ENCODE measurements at regions of chr12 and their contacts with region 1.

Region 1: DNA sequence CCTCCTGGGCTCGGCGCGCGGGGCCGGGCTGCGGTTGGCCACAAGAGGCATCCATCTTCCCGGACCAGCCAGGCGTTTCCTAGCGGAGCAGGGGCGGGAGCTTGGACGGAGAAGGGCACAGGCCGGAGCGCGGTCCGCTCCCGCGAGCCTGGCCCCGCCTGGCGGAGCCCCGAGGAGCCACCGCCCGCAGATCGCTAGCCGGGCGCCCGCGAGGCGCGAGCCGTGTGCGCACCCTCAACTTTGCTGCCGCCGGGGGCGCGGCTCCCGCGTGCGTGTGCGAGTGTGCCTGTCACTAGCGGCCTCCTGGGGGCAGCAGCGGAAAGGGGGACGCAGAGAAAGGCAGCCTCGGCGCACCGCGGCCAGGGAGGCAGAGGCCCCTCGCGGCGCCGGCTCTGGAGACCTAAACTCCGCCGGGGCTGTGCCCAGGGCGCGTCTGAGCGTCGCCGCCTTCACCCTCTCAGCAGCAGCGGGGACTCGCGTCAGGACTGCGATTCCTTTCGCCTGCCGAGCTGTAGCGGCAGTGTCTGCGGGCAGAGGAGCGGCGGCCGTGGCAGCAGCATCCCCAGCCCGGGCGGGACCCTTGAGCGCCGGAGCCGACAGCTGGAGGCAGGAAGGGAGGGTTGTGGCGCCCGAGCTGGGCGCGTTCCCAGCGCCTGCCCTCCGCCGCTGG is 644 bp upstream of the SRGAP1 start:
- DNase-seq: peak; percentile 85
- H3K4me3 Mint-ChIP-seq: peak overlapping the region; percentile 62
- H3K27ac Mint-ChIP-seq: no peak overlapping the region
- H3K4me1 Mint-ChIP-seq: peaks cover 9% of the 10 kb centered on the region
- H3K27me3 Mint-ChIP-seq: peaks cover 30% of the 10 kb centered on the region

Region 2: DNA sequence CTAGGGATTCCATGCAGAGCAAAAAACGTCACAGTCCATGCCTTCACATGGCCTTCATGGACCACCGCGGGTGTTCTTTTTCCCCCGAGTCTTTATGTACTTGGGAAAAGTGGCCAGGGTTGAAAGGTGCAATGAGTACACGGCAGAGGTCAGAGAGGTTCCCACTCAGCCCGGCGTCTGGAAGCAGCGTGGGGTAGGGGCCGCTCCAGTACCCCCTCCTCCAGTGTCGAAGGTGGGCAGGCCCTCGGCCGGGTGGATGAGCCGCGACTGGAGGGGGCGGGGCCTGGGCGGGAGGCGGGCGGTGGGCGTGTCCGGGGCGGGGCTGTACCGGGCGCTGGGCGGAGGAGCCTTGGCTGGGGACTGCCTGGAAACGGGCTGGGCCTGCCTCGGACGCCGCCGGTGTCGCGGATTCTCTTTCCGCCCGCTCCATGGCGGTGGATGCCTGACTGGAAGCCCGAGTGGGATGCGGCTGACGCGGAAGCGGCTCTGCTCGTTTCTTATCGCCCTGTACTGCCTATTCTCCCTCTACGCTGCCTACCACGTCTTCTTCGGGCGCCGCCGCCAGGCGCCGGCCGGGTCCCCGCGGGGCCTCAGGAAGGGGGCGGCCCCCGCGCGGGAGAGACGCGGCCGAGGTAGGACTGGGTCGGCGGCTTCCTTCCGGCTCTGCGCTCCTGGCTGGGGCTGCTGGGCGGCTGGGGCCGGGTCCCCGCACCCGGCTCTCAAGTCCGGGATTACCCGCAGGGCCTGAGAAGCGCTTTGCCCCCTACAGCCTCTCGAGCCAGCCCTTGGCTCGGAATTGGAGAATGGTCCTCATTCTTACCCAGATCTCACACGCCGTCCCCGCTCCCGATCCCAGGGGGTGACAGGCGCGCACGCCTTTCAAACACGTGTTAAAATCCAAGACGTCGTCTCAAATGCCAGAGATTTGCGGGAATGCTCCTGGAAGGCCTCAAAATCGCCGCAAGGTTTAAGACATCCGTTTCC is 64.1 kb before region 1 on chr12 and contains the start of gene RXYLT1:
- CTCF ChIA-PET with region 1: interaction called, 3 read pairs
- POLR2A ChIA-PET with region 1: no interaction called
- intact Hi-C with region 1: loop called (anchors 2 kb)
- DNase-seq: peak; percentile 90
- H3K4me3 Mint-ChIP-seq: peak within 1 kb of the TSS; percentile 93
- H3K27ac Mint-ChIP-seq: peak within 1 kb of the TSS; percentile 88
- H3K4me1 Mint-ChIP-seq: peaks cover 10% of the 10 kb centered on the region
- H3K27me3 Mint-ChIP-seq: no peaks in the 10 kb centered on the region
- total RNA-seq, gene RXYLT1: 14.0 to 14.3 TPM

Region 3: GRCh38 chr12:64099397-64099796 is 255.5 kb after region 1 on chr12:
- CTCF ChIA-PET with region 1: no interaction called
- POLR2A ChIA-PET with region 1: no interaction called
- intact Hi-C with region 1: no loop called
- DNase-seq: no peak
- H3K4me3 Mint-ChIP-seq: no peak overlapping the region
- H3K27ac Mint-ChIP-seq: no peak overlapping the region
- H3K4me1 Mint-ChIP-seq: no peaks in the 10 kb centered on the region
- H3K27me3 Mint-ChIP-seq: peaks cover 13% of the 10 kb centered on the region

Region 4: DNA sequence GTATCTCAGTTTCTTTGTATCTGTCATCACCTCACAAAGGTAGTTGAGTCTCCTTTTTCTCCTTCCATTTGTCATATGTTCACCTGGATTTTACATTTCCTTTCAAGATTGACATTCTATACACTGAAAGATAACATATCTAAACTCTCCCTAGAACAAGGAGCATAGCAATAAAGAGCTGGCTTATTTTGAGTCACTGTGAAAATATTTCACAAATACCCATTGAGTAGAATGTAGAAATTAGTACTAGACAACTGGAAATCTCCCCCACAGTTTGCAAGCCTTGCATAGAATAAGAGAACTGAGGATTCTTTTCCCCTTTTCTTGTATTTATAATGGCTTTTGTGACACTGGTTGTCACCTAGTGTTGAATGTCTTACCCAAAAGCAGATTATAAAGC is 267.0 kb after region 1 on chr12:
- CTCF ChIA-PET with region 1: no interaction called
- POLR2A ChIA-PET with region 1: no interaction called
- intact Hi-C with region 1: no loop called
- DNase-seq: no peak
- H3K4me3 Mint-ChIP-seq: no peak overlapping the region
- H3K27ac Mint-ChIP-seq: no peak overlapping the region
- H3K4me1 Mint-ChIP-seq: no peaks in the 10 kb centered on the region
- H3K27me3 Mint-ChIP-seq: peaks cover 10% of the 10 kb centered on the region

Region 5: GRCh38 chr12:64222009-64222765 is 378.3 kb after region 1 on chr12 and contains the start of gene KICS2:
- CTCF ChIA-PET with region 1: interaction called, 6 read pairs
- POLR2A ChIA-PET with region 1: no interaction called
- intact Hi-C with region 1: loop called (anchors 1 kb)
- DNase-seq: peak; percentile 94
- H3K4me3 Mint-ChIP-seq: peak within 1 kb of the TSS; percentile 83
- H3K27ac Mint-ChIP-seq: peak within 1 kb of the TSS; percentile 84
- H3K4me1 Mint-ChIP-seq: peaks cover 20% of the 10 kb centered on the region
- H3K27me3 Mint-ChIP-seq: peaks cover 2% of the 10 kb centered on the region
- total RNA-seq, gene KICS2: 12.4 to 14.1 TPM

Region 6: GRCh38 chr12:64256166-64256800 is 412.4 kb after region 1 on chr12:
- CTCF ChIA-PET with region 1: interaction called, 24 read pairs
- POLR2A ChIA-PET with region 1: no interaction called
- intact Hi-C with region 1: loop called (anchors 1 kb)
- DNase-seq: no peak
- H3K4me3 Mint-ChIP-seq: no peak overlapping the region
- H3K27ac Mint-ChIP-seq: no peak overlapping the region
- H3K4me1 Mint-ChIP-seq: no peaks in the 10 kb centered on the region
- H3K27me3 Mint-ChIP-seq: no peaks in the 10 kb centered on the region

Region 7: DNA sequence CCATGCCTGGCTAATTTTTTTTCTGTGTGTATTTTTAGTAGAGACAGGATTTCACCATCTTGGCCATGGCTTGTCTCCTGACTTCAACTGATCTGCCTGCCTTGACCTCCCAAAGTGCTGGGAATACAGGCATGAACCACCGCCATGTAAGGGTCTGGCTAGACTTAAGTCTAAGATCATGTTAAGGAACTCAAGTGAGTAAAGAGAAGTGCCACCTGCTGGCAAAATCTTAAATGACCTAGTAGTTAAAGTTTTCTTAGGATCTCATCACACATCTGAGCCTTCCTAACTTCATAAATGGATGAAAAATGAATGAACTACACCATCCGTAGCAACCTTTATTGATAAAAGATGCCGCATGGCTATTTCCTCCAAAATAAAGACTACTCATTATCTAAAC is 548.4 kb after region 1 on chr12:
- CTCF ChIA-PET with region 1: no interaction called
- POLR2A ChIA-PET with region 1: no interaction called
- intact Hi-C with region 1: loop called (anchors 5 kb)
- DNase-seq: no peak
- H3K4me3 Mint-ChIP-seq: no peak overlapping the region
- H3K27ac Mint-ChIP-seq: no peak overlapping the region
- H3K4me1 Mint-ChIP-seq: peaks cover 7% of the 10 kb centered on the region
- H3K27me3 Mint-ChIP-seq: no peaks in the 10 kb centered on the region

Measured in activated CD4-positive, alpha-beta memory T cell treated with anti-CD3 and anti-CD28 coated beads for 36 hours (primary cell).